ENCODE measurements at regions of chr4 and their contacts with region 1.

Region 1: DNA sequence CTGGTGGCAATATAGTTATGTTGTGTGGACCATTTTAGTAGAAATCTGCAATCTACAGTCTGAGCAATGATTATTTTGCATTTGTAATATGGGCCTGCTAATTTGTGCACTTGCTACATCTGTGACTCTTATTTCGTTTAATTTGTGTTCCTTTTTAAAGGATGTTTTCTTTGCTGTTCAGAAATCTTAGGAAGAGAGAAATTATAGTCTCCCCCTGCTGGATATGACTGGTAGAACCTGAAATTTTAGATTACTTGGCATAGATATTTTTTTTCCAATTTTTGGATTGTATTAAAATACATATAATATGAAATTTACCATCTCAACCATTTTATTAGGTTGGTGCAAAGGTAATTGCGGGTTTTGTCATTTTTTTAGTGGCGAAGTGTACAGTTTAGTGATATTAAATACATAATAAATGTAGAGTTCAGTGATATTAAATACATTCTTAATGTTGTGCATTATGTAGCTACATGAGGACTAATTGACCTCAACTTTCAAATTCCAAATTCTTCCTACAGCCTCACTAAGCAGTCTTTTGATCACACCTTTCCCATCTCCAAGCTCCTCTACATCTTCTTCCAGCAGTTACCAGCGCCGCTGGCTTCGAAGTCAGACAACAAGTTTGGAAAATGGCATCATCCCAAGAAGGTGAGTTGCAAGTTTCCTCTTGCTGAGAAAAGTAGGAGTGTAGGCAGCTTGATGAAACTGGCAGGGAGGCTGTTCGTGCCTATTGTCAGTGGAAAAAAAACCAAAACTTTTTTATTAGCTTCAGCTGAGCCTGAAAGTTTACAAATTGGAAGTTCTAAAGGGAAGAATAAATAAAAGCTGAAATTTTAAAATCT is 82.2 kb downstream of the FNIP2 start:
- DNase-seq: no peak
- ATAC-seq: peak; percentile 49
- H3K4me3 ChIP-seq: no peak overlapping the region
- H3K27ac ChIP-seq: no peak overlapping the region
- H3K4me1 ChIP-seq: peaks cover 4% of the 10 kb centered on the region
- H3K27me3 ChIP-seq: no peaks in the 10 kb centered on the region
- CTCF ChIP-seq: peak; percentile 80

Region 2: GRCh38 chr4:158729716-158730559 is 121.1 kb before region 1 on chr4:
- intact Hi-C with region 1: loop called (anchors 5 kb)
- DNase-seq: no peak
- ATAC-seq: peak; percentile 98
- H3K4me3 ChIP-seq: no peak overlapping the region
- H3K27ac ChIP-seq: no peak overlapping the region
- H3K4me1 ChIP-seq: no peaks in the 10 kb centered on the region
- H3K27me3 ChIP-seq: no peaks in the 10 kb centered on the region
- CTCF ChIP-seq: peak; percentile 87